Right cardiac atrium (tissue), 5 donors: ENCODE measurements at regions of chr1 and their contacts with region 1.

Region 1: DNA sequence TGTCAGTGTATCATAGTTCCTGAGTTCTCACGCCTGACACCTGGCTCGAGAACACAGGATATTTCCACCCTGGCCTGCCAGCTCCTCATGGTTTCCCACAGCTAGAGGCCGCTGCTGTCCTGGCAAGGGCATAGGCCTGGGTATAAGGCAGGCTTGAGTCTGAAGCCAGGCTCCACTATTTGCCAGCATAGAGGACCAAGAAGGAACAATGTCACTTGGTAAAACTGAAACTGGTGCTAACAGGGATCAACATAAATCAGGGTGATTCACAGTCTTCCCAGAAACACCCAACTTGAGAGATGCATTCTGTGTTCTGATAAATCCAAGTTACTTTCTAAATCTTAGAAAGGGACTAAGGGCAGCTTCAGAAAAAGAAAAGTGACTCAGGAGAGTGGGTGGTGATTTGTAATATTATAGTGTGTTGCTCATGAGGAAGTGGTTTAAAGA is 6.9 kb upstream of the S100A2 start:
- DNase-seq: peak; percentile 83 to 92 (median 90)
- ATAC-seq: peak; percentile 89 to 91
- H3K4me3 ChIP-seq: no peak overlapping the region
- H3K27ac ChIP-seq: peak overlapping the region; percentile 12
- H3K4me1 ChIP-seq: peaks cover 6% of the 10 kb centered on the region
- H3K27me3 ChIP-seq: no peaks in the 10 kb centered on the region

Region 2: DNA sequence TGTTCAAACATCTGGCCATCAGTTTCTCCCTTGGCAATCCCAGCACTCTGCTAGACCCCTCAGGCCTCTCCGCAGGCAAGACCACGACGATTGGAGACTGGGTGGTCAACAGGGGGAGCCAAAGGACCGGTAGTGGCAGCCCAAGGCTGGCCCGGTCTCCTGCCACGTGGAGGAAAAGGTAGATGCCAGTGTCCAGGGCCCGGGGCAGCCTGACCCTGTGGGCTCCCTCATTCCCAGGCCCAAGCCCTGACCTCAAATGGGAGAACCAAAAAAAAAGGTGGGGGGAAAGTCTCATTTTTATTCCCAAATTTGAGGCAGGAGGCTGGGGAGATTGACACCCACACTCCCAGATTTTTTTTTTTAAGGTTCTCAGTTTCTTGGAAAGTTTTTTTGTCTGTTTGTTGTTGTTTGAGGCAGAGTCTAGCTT is 61.6 kb before region 1 on chr1:
- intact Hi-C with region 1: loop called (anchors 1 to 5 kb)
- DNase-seq: peak; percentile 85 to 94 (median 91)
- ATAC-seq: peak; percentile 61
- H3K4me3 ChIP-seq: no peak overlapping the region
- H3K27ac ChIP-seq: no peak overlapping the region
- H3K4me1 ChIP-seq: peaks cover 7% of the 10 kb centered on the region
- H3K27me3 ChIP-seq: no peaks in the 10 kb centered on the region

Region 3: GRCh38 chr1:153532769-153533599 is 39.6 kb before region 1 on chr1:
- intact Hi-C with region 1: loop called in 3 of 4 experiments (anchors 2 to 5 kb)
- DNase-seq: peak; percentile 87 to 96 (median 94)
- ATAC-seq: peak; percentile 65 to 73
- H3K4me3 ChIP-seq: peak overlapping the region; percentile 73
- H3K27ac ChIP-seq: peak overlapping the region; percentile 61
- H3K4me1 ChIP-seq: no peaks in the 10 kb centered on the region
- H3K27me3 ChIP-seq: no peaks in the 10 kb centered on the region

Region 4: DNA sequence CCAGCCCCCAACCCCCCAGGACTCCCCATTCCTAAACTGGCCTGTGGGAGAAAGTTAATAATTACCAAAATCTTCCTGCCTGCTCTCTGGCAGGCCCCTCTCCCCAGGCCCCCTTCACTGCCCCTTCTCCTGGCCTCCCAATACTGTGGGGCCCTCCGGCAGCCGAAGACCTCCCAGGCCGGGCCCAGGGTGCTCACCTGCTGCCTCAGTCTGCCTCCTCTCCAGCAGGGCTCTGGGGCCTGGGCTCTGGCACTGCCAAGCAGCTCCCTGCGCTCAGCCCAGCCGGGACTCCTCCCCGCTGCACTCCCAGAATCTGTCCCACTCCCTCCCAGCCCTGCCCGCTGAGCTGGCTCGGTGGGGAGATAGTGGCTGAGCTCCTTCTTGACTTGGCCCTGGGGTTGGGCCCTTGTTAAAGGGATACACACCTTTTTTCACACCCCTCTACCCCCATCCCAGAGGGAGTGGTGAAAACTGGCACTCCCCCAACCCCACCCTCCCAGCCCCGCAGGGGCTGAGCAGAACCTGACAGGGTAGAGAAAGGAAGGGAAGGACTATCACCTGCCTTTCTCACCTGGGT is 40.3 kb after region 1 on chr1 and contains the start of gene S100A16:
- intact Hi-C with region 1: loop called in 1 of 4 experiments (anchors 5 kb)
- DNase-seq: peak; percentile 87 to 93 (median 92)
- ATAC-seq: peak; percentile 71 to 85
- H3K4me3 ChIP-seq: peak within 1 kb of the TSS; percentile 70
- H3K27ac ChIP-seq: peak within 1 kb of the TSS; percentile 78
- H3K4me1 ChIP-seq: peaks cover 23% of the 10 kb centered on the region
- H3K27me3 ChIP-seq: no peaks in the 10 kb centered on the region
- total RNA-seq, gene S100A16: 42.6 to 56.1 (median 44.3) TPM

Region 5: GRCh38 chr1:153626922-153627796 is 54.6 kb after region 1 on chr1 and contains the start of gene S100A13:
- intact Hi-C with region 1: loop called in 2 of 4 experiments (anchors 10 kb)
- DNase-seq: peak; percentile 81 to 94 (median 92)
- ATAC-seq: peak; percentile 74 to 75
- H3K4me3 ChIP-seq: peak within 1 kb of the TSS; percentile 40
- H3K27ac ChIP-seq: peak within 1 kb of the TSS; percentile 92
- H3K4me1 ChIP-seq: peaks cover 22% of the 10 kb centered on the region
- H3K27me3 ChIP-seq: no peaks in the 10 kb centered on the region
- total RNA-seq, gene S100A13: 183 to 265 (median 220) TPM

Region 6: DNA sequence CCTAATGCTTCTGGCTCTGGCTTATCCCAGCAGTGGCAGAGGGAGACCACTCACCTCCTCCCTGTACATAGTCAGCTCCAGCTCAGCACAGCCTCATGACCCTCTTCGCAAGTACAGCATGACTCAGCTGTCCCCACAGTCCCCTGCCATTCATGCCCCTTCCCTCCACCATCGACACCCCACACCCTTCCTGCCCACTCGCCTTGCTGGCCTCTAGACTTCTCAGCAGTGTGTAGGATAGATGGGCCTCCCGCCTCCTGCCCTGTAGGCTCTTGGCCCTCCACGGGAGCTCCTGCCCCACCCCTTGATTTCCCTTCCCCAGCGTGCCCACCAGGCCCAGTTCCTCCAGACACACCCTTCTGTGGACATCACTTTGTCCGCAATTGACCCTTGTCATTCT is 115.7 kb after region 1 on chr1:
- intact Hi-C with region 1: no loop called
- DNase-seq: no peak
- ATAC-seq: peak in 1 of 2 donors; percentile 9
- H3K4me3 ChIP-seq: no peak overlapping the region
- H3K27ac ChIP-seq: no peak overlapping the region
- H3K4me1 ChIP-seq: no peaks in the 10 kb centered on the region
- H3K27me3 ChIP-seq: no peaks in the 10 kb centered on the region

Region 7: GRCh38 chr1:153849487-153850185 is 277.0 kb after region 1 on chr1:
- intact Hi-C with region 1: no loop called
- DNase-seq: no peak
- ATAC-seq: no peak
- H3K4me3 ChIP-seq: no peak overlapping the region
- H3K27ac ChIP-seq: no peak overlapping the region
- H3K4me1 ChIP-seq: no peaks in the 10 kb centered on the region
- H3K27me3 ChIP-seq: no peaks in the 10 kb centered on the region